ENCODE measurements at regions of chr14 and their contacts with region 1.

Region 1: GRCh38 chr14:50964595-50965390 is 20.5 kb upstream of the PYGL start:
- DNase-seq: peak; percentile 65 to 93
- H3K4me3 ChIP-seq: no peak overlapping the region
- H3K27ac ChIP-seq: peak overlapping the region; percentile 49
- H3K4me1 ChIP-seq: peaks cover 32% of the 10 kb centered on the region
- H3K27me3 ChIP-seq: no peaks in the 10 kb centered on the region
- CTCF ChIP-seq: no peak

Region 2: DNA sequence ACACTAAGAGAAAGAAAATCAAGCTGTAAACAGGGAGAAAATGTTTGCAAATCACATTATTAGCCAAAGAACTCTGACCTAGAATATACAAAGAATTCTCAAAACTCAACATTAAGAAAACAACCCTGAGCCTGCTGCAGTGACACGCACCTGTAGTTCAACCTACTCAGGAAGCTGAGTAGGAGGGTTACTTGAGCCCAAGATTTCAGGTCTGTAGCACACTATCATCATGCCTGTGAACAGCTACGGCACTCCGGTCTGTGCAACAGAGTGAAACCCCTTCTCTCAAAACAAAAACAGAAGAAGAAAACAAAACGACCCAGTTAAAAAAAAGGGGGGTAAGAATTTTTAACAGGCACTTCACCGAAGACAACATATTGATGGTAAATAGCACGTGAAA is 317.5 kb before region 1 on chr14:
- CTCF ChIA-PET with region 1: no interaction called
- POLR2A ChIA-PET with region 1: no interaction called
- intact Hi-C with region 1: no loop called
- DNase-seq: no peak
- H3K4me3 ChIP-seq: no peak overlapping the region
- H3K27ac ChIP-seq: no peak overlapping the region
- H3K4me1 ChIP-seq: no peaks in the 10 kb centered on the region
- H3K27me3 ChIP-seq: no peaks in the 10 kb centered on the region
- CTCF ChIP-seq: no peak

Region 3: GRCh38 chr14:50978888-50979287 is 14.1 kb after region 1 on chr14:
- CTCF ChIA-PET with region 1: no interaction called
- POLR2A ChIA-PET with region 1: interaction called, 11 read pairs
- intact Hi-C with region 1: no loop called
- DNase-seq: no peak
- H3K4me3 ChIP-seq: no peak overlapping the region
- H3K27ac ChIP-seq: no peak overlapping the region
- H3K4me1 ChIP-seq: no peaks in the 10 kb centered on the region
- H3K27me3 ChIP-seq: no peaks in the 10 kb centered on the region
- CTCF ChIP-seq: no peak

Region 4: GRCh38 chr14:51277753-51278415 is 313.1 kb after region 1 on chr14:
- CTCF ChIA-PET with region 1: no interaction called
- POLR2A ChIA-PET with region 1: interaction called, 10 read pairs
- intact Hi-C with region 1: no loop called
- DNase-seq: no peak
- H3K4me3 ChIP-seq: no peak overlapping the region
- H3K27ac ChIP-seq: no peak overlapping the region
- H3K4me1 ChIP-seq: no peaks in the 10 kb centered on the region
- H3K27me3 ChIP-seq: no peaks in the 10 kb centered on the region
- CTCF ChIP-seq: no peak

Region 5: GRCh38 chr14:51969852-51970540 is 1005.2 kb after region 1 on chr14:
- CTCF ChIA-PET with region 1: interaction called, 13 read pairs
- POLR2A ChIA-PET with region 1: no interaction called
- intact Hi-C with region 1: no loop called
- DNase-seq: no peak
- H3K4me3 ChIP-seq: no peak overlapping the region
- H3K27ac ChIP-seq: no peak overlapping the region
- H3K4me1 ChIP-seq: no peaks in the 10 kb centered on the region
- H3K27me3 ChIP-seq: no peaks in the 10 kb centered on the region
- CTCF ChIP-seq: no peak

Measured in PC-9 (cell line).